Left cardiac atrium (tissue), 4 donors: ENCODE measurements at regions of chr18 and their contacts with region 1.

Region 1: GRCh38 chr18:3703732-3704176 is 253.8 kb downstream of the TGIF1 start:
- DNase-seq: peak; percentile 63
- ATAC-seq: peak; percentile 70 to 85

Region 2: DNA sequence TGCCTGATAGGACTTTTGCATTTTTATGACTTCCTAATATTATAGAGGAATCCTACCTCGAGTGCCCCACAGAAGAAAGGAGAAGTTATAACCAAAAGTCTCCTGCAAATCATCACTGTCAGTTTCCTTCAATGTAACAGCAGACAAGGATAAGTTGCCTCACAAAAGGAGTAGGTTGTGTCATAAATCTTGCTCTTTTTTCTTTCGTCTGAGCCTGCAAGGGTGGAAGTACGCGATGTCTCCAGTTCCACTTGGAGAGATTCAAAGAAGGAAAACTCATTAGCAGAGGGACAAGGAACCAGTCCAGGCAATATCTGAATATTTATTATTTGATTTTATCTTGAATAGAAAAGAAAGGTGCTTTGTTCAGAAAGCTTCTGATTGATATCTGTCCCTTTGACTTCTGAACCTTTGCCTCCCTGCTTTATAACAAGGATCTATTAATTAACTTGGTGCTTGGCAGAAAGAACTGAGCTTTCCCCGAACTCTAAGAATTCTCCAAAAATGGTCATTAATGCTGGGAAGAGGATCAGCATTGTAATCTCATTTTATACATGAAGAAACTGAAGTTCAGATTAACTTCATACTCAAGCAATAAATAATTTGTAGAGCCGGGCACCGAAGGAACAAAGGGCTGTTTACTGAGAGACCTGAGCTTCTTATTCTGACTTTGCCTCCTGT is 18.7 kb after region 1 on chr18:
- intact Hi-C with region 1: no loop called
- DNase-seq: no peak
- ATAC-seq: peak in 1 of 2 donors; percentile 30

Region 3: GRCh38 chr18:3794537-3795348 is 91.0 kb after region 1 on chr18:
- intact Hi-C with region 1: no loop called
- DNase-seq: peak; percentile 30
- ATAC-seq: peak; percentile 38 to 81

Region 4: GRCh38 chr18:3995476-3996102 is 291.8 kb after region 1 on chr18:
- intact Hi-C with region 1: loop called in 1 of 2 experiments (anchors 5 kb)
- DNase-seq: peak; percentile 47
- ATAC-seq: peak in 1 of 2 donors; percentile 52